Activated B cell treated with CpG ODN at 0.5 μM for 24 hours (primary cell): ENCODE measurements at regions of chr6 and their contacts with region 1.

Region 1: DNA sequence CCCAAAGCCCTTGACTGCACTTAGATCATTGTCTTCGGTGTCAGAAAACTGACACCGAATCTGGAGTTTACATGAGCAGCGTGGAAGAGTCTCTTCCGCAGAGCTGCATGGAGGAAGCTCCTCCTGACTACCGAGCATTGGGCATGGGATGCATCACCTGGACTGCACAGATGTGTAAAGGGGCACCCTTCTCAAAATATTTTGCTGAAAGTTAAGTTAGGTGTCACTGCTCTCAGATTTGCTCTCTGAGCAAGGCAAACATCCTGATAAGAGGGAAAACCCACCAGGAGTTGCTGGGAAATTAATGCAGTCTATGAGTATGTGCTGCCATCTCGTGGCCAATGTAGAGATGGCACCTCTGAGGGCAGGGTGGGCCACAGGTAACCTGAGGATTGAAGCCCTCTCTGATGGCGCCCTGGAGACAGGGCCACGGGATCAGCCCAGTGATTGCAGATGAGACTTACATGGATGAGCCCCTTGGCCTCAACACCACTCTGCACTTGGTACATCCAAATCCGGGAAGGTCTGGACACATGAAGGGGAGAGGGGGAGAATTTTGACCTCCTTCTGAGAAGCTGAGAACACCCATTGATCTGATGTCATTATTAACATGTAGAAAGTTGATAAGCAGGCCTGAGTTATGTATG is 129.9 kb downstream of the LPA start:
- DNase-seq: peak; percentile 32
- ATAC-seq: peak; percentile 56
- H3K4me3 Mint-ChIP-seq: no peak overlapping the region
- H3K27ac Mint-ChIP-seq: no peak overlapping the region
- H3K4me1 Mint-ChIP-seq: no peaks in the 10 kb centered on the region
- H3K27me3 Mint-ChIP-seq: peaks cover 9% of the 10 kb centered on the region
- CTCF ChIP-seq: peak; percentile 63

Region 2: GRCh38 chr6:160137989-160138835 is 396.0 kb before region 1 on chr6:
- CTCF ChIA-PET with region 1: interaction called, 6 read pairs
- POLR2A ChIA-PET with region 1: interaction called, 3 read pairs
- intact Hi-C with region 1: loop called (anchors 1 kb)
- DNase-seq: no peak
- ATAC-seq: no peak
- H3K4me3 Mint-ChIP-seq: no peak overlapping the region
- H3K27ac Mint-ChIP-seq: no peak overlapping the region
- H3K4me1 Mint-ChIP-seq: no peaks in the 10 kb centered on the region
- H3K27me3 Mint-ChIP-seq: no peaks in the 10 kb centered on the region
- CTCF ChIP-seq: no peak

Region 3: DNA sequence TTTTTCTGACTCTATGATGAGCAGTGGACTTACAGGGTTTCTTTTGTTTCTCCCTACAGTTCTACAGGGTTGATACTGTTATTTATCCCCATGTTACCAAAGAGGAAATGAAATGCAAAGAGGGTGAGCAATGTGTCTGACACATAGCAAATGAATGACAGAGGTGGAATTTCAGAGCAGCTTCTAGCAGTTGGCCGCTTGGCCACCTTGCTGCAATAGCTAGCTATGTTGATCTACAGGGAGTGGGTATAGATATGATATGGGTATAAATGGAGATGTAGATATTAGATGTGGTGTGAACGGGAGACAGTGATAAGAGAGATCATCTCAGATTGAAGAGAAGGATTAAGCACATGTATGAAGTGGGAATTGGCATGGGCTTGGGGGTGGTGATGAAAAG is 196.9 kb before region 1 on chr6:
- CTCF ChIA-PET with region 1: no interaction called
- POLR2A ChIA-PET with region 1: no interaction called
- intact Hi-C with region 1: no loop called
- DNase-seq: no peak
- ATAC-seq: no peak
- H3K4me3 Mint-ChIP-seq: no peak overlapping the region
- H3K27ac Mint-ChIP-seq: no peak overlapping the region
- H3K4me1 Mint-ChIP-seq: no peaks in the 10 kb centered on the region
- H3K27me3 Mint-ChIP-seq: peaks cover 14% of the 10 kb centered on the region
- CTCF ChIP-seq: no peak

Region 4: GRCh38 chr6:160431226-160431625 is 102.9 kb before region 1 on chr6:
- CTCF ChIA-PET with region 1: no interaction called
- POLR2A ChIA-PET with region 1: no interaction called
- intact Hi-C with region 1: no loop called
- DNase-seq: no peak
- ATAC-seq: no peak
- H3K4me3 Mint-ChIP-seq: no peak overlapping the region
- H3K27ac Mint-ChIP-seq: no peak overlapping the region
- H3K4me1 Mint-ChIP-seq: no peaks in the 10 kb centered on the region
- H3K27me3 Mint-ChIP-seq: peaks cover 32% of the 10 kb centered on the region
- CTCF ChIP-seq: no peak

Region 5: GRCh38 chr6:160520043-160520904 is 13.9 kb before region 1 on chr6:
- CTCF ChIA-PET with region 1: interaction called, 46 read pairs
- POLR2A ChIA-PET with region 1: interaction called, 6 read pairs
- intact Hi-C with region 1: loop called (anchors 1 kb)
- DNase-seq: peak; percentile 73
- ATAC-seq: peak; percentile 78
- H3K4me3 Mint-ChIP-seq: peak overlapping the region; percentile 93
- H3K27ac Mint-ChIP-seq: peak overlapping the region; percentile 81
- H3K4me1 Mint-ChIP-seq: peaks cover 11% of the 10 kb centered on the region
- H3K27me3 Mint-ChIP-seq: peaks cover 26% of the 10 kb centered on the region
- CTCF ChIP-seq: no peak